ENCODE measurements at regions of chr19 and their contacts with region 1.

Region 1: GRCh38 chr19:16371540-16371986 is 46.9 kb downstream of the KLF2 start:
- DNase-seq: no peak

Region 2: GRCh38 chr19:16218851-16219250 is 152.7 kb before region 1 on chr19:
- in situ Hi-C with region 1: no loop called
- DNase-seq: no peak

Region 3: DNA sequence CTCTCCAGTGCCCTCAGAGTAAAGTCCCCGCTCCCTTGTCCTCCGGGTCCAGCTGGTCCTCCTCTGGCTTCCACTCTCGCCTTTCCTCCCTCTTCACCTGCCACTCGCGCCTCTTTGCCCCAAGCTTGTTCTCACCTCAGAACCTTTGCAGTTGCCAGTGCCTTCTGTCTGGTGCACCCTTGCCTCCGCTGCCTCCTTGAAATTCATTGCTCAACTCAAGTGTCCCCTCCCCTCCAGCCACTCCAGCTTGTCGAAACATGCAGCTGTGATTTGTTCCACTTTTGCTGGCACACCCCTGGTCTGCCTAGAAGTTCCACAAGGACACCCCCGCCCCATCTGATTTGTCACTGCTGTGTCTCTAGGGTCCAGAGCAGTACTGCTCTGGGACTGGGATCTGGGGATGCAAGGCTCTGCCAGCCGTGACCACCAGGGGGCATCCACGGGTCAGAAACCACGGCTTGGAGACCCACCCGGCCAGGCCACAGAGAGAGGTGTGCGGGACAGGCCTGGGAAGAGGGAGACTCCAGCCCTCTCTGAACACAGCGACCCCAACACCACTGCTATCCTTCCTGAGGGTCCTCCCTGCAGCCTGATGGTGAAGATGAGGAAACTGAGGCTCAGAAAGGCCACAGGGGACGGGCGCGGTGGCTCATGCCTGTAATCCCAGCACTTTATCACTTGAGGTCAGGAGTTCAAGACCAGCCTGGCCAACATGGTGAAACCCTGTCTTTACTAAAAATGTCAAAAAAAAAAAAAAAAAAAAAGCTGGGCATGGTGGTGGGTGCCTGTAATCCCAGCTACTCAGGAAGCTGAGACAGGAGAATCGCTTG is 124.0 kb before region 1 on chr19:
- in situ Hi-C with region 1: loop called (anchors 25 kb)
- DNase-seq: peak; percentile 73

Region 4: GRCh38 chr19:16412596-16413355 is 41.2 kb after region 1 on chr19:
- in situ Hi-C with region 1: no loop called
- DNase-seq: no peak

Region 5: DNA sequence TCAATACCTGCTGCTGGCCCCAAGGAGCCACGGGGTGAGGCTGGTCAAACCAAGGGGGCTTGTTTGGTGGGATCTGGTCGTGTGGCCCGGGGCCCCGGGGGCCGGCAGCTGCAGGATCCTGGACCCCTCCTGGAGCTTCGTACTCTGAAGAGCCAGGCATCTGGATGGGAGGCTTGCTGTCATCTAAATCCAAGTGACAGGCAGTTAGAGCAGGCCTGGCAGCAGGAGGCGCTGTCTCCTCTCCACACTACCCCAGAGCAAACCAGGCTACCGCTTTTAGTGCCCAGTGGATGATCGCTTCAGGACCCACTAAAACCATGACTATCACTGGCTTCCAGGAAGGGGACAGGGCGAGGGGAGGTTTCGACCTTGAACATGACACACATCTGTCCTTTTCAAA is 156.5 kb after region 1 on chr19:
- in situ Hi-C with region 1: no loop called
- DNase-seq: no peak